AG04450 (cell line): ENCODE measurements at regions of chr7 and their contacts with region 1.

Region 1: GRCh38 chr7:120805636-120806388 is 52.1 kb downstream of the TSPAN12 start:
- DNase-seq: no peak
- H3K4me3 ChIP-seq: no peak overlapping the region
- H3K27ac ChIP-seq: no peak overlapping the region
- H3K27me3 ChIP-seq: no peaks in the 10 kb centered on the region
- CTCF ChIP-seq: peak; percentile 90

Region 2: DNA sequence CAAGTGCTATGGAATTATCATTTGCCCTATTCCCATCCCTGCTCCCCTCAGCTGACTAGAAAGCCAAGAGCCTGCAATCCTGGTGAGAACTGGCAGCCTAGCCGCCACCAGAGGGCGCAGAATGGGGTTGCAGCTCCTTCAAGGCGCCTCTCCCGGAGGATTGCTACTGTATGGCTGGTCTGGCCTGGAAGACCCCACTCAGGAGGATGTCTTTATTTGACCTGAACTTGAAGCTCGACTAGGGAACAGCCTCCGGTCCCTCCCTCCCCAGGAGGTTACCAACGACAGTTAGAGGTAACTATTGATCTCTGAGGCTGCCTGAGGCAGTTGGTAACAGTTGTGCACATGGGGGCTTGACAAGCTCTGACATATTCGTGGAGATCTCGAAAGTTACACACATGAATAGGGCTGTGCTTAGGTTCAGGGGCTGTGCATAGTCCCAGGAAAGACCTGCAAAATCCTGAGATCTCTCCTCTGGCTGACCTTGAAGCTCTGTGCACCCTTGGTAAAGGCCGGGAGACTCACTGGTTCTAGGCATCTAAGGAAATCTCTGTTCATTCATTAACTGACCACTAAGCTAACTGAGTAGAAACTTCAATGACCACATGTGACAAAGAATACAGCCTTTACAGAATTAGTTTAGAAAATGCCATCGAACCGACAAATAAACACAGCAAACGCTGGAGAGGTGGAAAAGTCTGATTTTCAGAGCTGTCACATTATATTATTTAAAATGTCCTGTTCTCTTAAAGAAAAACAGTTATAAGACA is 13.5 kb before region 1 on chr7:
- CTCF ChIA-PET with region 1: interaction called, 58 read pairs
- POLR2A ChIA-PET with region 1: no interaction called
- DNase-seq: peak; percentile 29
- H3K4me3 ChIP-seq: no peak overlapping the region
- H3K27ac ChIP-seq: no peak overlapping the region
- H3K27me3 ChIP-seq: no peaks in the 10 kb centered on the region
- CTCF ChIP-seq: peak; percentile 95

Region 3: GRCh38 chr7:120827371-120828118 is 21.7 kb after region 1 on chr7:
- CTCF ChIA-PET with region 1: interaction called, 12 read pairs
- POLR2A ChIA-PET with region 1: no interaction called
- DNase-seq: no peak
- H3K4me3 ChIP-seq: no peak overlapping the region
- H3K27ac ChIP-seq: no peak overlapping the region
- H3K27me3 ChIP-seq: no peaks in the 10 kb centered on the region
- CTCF ChIP-seq: no peak

Region 4: DNA sequence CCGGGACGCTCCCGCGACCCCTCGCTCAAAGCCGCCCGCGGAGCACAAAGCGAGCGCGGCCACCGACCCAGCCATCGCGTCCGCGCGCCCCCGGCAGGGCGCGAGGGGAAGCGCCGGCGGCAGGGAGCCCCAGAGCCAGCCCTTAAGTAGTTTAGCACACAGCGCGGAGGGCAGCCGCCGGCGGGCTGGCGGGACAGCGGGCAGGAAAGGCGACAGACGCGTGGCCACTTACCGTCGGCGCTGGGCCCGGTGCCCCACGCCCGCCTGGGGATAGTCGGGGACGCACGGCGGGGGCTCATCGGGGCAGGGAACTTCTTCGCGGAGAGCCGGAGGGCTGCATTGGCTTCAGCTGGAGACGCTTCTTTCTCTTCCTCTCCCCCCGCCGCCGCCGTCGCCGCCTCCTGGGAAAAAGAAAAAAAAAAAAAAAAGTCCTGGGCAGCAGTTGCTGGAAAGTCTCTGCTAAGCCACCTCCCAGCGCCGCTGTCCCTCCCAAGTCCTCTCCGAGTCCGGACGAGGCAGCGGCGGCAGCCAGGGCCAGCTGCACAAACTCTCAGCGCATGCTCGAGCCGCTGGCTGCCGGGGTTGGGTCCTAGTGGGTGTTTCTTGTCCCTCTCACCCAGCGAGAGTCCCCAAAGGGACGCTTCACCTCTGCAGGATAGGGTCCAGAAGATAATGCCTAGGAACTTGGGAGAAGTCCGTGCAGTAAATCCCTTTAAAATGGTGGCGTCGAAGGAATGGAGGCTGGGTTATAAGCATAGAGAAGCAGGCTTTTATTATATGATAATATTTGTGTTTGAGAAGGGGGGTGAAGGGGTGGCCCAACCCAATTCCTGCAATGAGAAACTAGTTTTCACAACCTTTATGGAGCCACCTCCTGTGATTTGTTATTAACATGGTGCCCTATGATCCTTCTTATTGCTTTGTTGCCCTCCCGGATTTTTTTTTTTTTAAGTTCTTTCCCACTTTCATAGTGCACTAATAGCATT is 52.1 kb after region 1 on chr7 and contains the start of gene TSPAN12:
- CTCF ChIA-PET with region 1: interaction called, 17 read pairs
- POLR2A ChIA-PET with region 1: interaction called, 5 read pairs
- DNase-seq: no peak
- H3K4me3 ChIP-seq: peak within 1 kb of the TSS; percentile 71
- H3K27ac ChIP-seq: no peak within 1 kb of the TSS
- H3K27me3 ChIP-seq: no peaks in the 10 kb centered on the region
- CTCF ChIP-seq: peak; percentile 62
- polyA plus RNA-seq, gene TSPAN12: 3.4 and 6.9 TPM in 2 replicates

Region 5: DNA sequence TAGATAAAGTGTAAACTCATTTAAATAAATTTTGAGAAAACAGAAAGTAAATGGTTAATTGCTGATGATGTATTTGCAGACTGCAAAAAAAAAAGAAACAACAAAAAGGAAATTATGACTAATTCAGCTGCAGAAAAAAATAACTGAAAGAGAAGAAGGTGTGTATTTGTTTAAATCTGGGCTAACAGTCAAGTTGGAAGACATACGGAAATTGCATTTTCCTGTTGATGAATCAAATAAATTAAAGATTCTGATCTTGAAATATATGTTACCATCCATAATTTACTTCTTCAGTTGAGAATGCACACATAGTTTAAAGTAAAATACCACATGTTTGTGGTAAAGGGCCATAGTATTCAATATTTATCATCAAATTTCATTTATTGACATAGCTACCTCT is 125.4 kb after region 1 on chr7:
- CTCF ChIA-PET with region 1: interaction called, 11 read pairs
- POLR2A ChIA-PET with region 1: no interaction called
- DNase-seq: no peak
- H3K4me3 ChIP-seq: no peak overlapping the region
- H3K27ac ChIP-seq: no peak overlapping the region
- H3K27me3 ChIP-seq: no peaks in the 10 kb centered on the region
- CTCF ChIP-seq: no peak

Region 6: DNA sequence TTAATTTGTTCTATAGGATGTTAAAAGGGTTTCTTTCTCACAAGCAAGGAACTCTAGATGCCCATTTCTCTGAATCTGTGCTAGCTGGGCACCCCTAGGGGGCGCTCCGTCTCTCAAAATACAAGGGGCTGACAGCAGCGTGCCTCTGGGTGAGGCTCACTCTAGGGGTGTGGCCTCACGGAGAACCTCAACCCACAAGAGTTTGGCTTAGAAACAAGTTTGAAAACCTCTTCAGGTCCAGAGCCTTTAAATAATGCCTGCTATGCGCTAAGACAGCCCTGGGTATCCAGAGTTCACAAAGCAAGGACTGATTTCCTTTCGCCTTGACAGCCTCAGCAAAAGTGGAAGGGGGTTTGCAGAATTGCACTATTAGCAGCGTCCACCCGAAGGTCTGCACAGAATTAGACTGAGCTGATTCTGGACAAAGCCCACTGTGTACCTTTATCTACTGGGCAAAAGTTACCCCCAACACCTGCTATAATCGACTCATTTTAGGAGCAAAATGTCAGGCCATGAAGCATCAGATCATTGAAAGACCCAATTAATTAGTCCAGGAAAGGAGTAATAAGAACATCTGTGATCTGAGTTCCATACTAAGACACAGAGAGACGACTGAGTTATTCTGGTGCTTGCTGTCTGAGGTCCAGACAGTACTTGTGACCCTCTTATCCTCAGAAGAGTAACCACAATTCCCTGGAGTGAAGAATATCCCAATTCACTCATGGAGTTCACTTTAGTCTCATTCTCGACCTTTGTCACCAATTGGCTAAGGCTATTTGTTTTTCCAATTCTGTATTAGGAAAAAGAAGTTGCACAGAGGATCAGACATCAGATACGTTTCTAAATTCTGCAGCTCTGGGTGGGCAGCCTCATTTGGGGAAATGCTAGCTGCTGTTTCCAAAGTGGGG is 182.1 kb after region 1 on chr7:
- CTCF ChIA-PET with region 1: interaction called, 11 read pairs
- POLR2A ChIA-PET with region 1: no interaction called
- DNase-seq: peak; percentile 90
- H3K4me3 ChIP-seq: peak overlapping the region; percentile 76
- H3K27ac ChIP-seq: peak overlapping the region; percentile 40
- H3K27me3 ChIP-seq: no peaks in the 10 kb centered on the region
- CTCF ChIP-seq: peak; percentile 99